GM12878 (cell line): ENCODE measurements at regions of chr10 and their contacts with region 1.

Region 1: GRCh38 chr10:22742678-22743077 is 28.3 kb upstream of the PIP4K2A start:
- DNase-seq: peak; percentile 48
- ATAC-seq: peak; percentile 100
- H3K4me3 ChIP-seq: no peak overlapping the region
- H3K27ac ChIP-seq: peak overlapping the region; percentile 30; the same call in 1 of the 2 replicates
- H3K4me1 ChIP-seq: peaks cover 10% of the 10 kb centered on the region
- H3K27me3 ChIP-seq: no peaks in the 10 kb centered on the region
- CTCF ChIP-seq: no peak
- EP300 ChIP-seq: no peak
- POLR2A ChIP-seq: no peak
- RAD21 ChIP-seq: no peak

Region 2: DNA sequence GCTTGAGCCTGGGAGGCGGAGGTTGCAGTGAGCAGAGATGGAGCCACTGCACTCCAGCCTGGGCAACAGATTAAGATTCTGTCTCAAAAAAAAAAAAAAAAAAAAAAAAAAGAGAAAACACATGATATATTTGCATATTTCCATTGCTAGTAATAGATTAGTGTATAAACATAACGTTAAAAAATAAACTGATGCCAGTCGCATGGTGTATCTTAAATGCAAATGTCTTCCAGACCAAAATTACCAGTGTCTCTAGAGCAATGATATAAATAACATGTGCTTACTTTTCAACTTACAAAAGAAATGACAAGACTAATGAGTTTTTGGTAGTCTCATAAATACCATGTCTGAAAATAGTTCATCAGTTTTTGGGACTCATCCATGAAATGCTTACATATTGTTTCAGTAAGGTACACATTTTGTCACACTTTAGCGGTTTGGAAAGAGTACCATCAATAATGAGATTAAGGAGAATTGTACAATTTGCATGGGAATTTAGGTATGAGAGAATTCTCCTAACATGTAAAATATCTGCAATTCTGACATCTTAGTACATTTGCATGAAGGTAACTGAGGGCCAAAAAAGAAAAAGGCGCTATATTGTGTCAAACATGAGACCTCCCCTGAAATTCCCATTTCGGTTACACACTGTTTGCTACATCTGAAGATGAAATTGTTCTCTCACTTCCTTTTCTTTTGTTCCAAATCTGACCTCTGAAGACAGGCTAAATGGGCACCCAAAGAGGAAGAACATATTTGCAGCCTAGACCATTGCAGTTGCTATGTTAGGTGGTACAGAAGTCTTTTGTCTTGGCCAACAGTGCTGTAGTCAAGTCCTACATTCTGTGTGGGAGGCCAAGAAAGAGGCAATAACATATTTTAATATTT is 23.2 kb after region 1 on chr10:
- CTCF ChIA-PET with region 1: interaction called, 3 read pairs
- POLR2A ChIA-PET with region 1: no interaction called
- RAD21 ChIA-PET with region 1: interaction called, 11 read pairs
- SMC1A ChIA-PET with region 1: interaction called, 8 read pairs
- in situ Hi-C with region 1: no loop called
- intact Hi-C with region 1: no loop called
- DNase-seq: peak; percentile 80
- ATAC-seq: peak; percentile 91
- H3K4me3 ChIP-seq: no peak overlapping the region
- H3K27ac ChIP-seq: peak overlapping the region; percentile 65
- H3K4me1 ChIP-seq: peaks cover 32% of the 10 kb centered on the region
- H3K27me3 ChIP-seq: no peaks in the 10 kb centered on the region
- CTCF ChIP-seq: no peak
- EP300 ChIP-seq: peak; percentile 66 to 83; a peak in 3 of 4 replicates
- POLR2A ChIP-seq: no peak
- RAD21 ChIP-seq: peak; percentile 2; the same call in 1 of the 2 replicates

Region 3: DNA sequence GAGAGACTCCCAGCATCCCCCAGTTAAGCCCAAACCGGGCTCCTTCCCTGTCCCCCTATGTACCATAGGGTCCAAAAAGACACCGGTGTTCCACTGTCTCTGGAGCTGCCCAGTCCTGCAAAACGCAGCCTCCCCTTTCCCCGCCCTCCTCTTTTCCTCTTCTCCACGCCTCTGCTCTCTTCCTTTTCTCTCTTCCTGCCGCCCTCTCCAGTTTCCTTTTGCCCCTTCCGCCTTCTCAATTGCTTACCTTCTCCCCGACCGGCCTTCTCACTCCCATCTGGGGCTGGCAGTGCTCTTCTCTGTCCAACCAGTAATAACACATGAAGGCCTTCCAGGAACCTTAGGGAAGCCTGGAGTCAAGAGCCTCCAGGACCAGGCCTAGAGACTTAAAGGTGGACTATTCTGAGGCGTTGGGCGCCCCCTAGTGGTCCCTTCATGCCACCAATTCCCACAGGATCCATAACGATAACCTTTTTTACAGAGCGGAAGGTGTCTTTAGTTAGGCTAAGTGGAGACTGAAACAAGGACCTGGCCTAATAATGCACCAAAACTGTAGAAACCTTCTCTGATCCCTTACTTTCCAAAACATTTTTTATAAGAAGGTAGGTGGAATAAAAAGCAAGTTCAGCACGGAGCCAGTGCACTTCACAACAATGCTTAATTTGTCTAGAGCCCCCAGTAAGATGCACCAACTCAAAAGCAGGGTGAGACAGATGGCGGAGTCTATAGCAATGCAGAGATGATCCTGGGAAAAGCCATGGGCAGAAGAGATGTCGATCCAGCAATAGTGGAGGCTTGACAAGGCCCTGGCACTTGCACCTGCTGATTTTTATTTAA is 325.5 kb after region 1 on chr10:
- CTCF ChIA-PET with region 1: no interaction called
- POLR2A ChIA-PET with region 1: no interaction called
- RAD21 ChIA-PET with region 1: no interaction called
- SMC1A ChIA-PET with region 1: no interaction called
- in situ Hi-C with region 1: no loop called
- intact Hi-C with region 1: no loop called
- DNase-seq: peak; percentile 27
- ATAC-seq: peak; percentile 84
- H3K4me3 ChIP-seq: no peak overlapping the region
- H3K27ac ChIP-seq: no peak overlapping the region
- H3K4me1 ChIP-seq: peaks cover 28% of the 10 kb centered on the region
- H3K27me3 ChIP-seq: no peaks in the 10 kb centered on the region
- CTCF ChIP-seq: peak; percentile 79 to 81 (median 80)
- EP300 ChIP-seq: no peak
- POLR2A ChIP-seq: no peak
- RAD21 ChIP-seq: peak; percentile 85

Region 4: GRCh38 chr10:23540401-23541030 is 797.8 kb after region 1 on chr10:
- CTCF ChIA-PET with region 1: no interaction called
- POLR2A ChIA-PET with region 1: no interaction called
- RAD21 ChIA-PET with region 1: no interaction called
- SMC1A ChIA-PET with region 1: no interaction called
- in situ Hi-C with region 1: no loop called
- intact Hi-C with region 1: no loop called
- DNase-seq: no peak
- ATAC-seq: no peak
- H3K4me3 ChIP-seq: no peak overlapping the region
- H3K27ac ChIP-seq: no peak overlapping the region
- H3K4me1 ChIP-seq: no peaks in the 10 kb centered on the region
- H3K27me3 ChIP-seq: no peaks in the 10 kb centered on the region; a peak in 1 of 4 replicates
- CTCF ChIP-seq: no peak
- EP300 ChIP-seq: no peak
- POLR2A ChIP-seq: no peak
- RAD21 ChIP-seq: no peak